ENCODE measurements at regions of chr3 and their contacts with region 1.

Region 1: DNA sequence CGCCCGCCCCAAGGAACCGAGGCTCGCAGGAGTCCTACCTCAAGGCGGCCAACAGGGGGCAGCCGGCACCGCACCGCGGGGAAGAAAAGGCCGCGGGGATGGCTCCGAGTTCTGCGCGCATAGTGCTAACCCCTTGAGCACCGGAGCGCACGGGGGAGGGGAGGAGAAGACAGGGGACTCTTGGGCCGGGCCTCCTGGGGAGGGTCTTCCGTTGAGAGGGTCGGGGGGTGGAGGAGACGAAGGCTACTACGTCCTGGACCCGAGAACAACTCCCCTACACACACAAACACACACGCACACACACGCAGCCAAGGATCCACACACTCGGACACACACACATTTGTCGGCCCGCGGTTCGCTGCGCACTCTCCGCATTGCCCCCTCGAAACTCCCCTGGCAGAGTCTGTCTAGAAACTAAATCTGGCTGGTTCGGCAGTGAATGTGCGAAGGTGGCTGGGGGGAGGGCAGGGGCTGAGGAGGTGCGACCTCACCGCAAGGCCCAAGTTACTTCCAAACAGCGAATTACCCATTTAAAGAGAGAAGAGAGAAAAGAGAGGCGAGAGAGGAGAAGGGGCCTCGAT is 1.8 kb downstream of the WNT5A start:
- DNase-seq: peak; percentile 57
- H3K4me3 ChIP-seq: peak overlapping the region; percentile 58 to 61
- H3K27ac ChIP-seq: peak overlapping the region; percentile 62 to 64
- H3K4me1 ChIP-seq: no peaks in the 10 kb centered on the region
- H3K27me3 ChIP-seq: peaks cover 10% of the 10 kb centered on the region
- CTCF ChIP-seq: peak; percentile 57 to 80 (median 68)
- POLR2A ChIP-seq: no peak

Region 2: GRCh38 chr3:54853573-54854404 is 631.5 kb before region 1 on chr3:
- intact Hi-C with region 1: loop called (anchors 10 kb)
- DNase-seq: peak; percentile 64
- H3K4me3 ChIP-seq: no peak overlapping the region
- H3K27ac ChIP-seq: no peak overlapping the region
- H3K4me1 ChIP-seq: no peaks in the 10 kb centered on the region
- H3K27me3 ChIP-seq: no peaks in the 10 kb centered on the region
- CTCF ChIP-seq: peak; percentile 78 to 88 (median 83)
- POLR2A ChIP-seq: no peak

Region 3: DNA sequence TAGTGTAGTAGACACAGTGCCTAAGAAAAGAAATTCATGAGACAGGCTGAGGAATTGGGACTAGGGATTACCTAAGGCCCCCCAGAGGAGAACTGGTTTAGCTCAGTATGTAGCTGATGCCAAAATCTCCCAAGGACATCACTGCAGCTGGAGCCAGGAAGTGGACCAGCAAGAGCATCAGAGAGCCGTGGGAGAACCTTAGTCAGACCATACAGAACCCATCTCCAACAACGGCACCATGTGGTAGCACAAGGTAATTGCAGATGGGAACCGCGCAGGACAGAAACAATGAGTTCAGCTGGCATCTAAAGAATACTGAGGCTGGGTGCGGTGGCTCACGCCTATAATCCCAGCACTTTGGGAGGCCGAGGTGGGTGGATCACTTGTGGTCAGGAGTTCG is 79.9 kb before region 1 on chr3:
- intact Hi-C with region 1: no loop called
- DNase-seq: no peak
- H3K4me3 ChIP-seq: no peak overlapping the region
- H3K27ac ChIP-seq: no peak overlapping the region
- H3K4me1 ChIP-seq: no peaks in the 10 kb centered on the region
- H3K27me3 ChIP-seq: no peaks in the 10 kb centered on the region
- CTCF ChIP-seq: no peak
- POLR2A ChIP-seq: no peak

Region 4: DNA sequence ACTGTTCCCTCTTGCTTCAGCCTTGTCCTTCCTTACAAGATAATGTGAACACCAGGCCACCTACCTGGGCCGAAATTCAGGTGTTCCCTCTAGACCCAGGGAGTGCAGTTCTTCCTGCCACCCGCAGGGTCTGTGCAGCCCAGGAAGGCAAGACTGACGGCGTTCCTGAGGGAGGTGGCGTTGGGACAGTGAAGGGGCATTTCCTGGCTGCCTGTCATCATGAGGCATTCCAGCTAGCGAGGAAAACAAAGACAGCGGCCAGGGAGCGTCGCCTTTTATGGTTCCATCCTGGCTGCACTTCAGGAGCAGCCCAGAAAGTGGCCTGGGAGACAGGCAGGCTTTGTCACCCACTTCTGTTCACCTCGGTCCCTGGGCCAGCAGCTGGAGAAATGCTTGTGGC is 86.6 kb after region 1 on chr3:
- intact Hi-C with region 1: loop called (anchors 5 kb)
- DNase-seq: peak; percentile 79
- H3K4me3 ChIP-seq: no peak overlapping the region
- H3K27ac ChIP-seq: peak overlapping the region in 1 of 2 donors; percentile 10
- H3K4me1 ChIP-seq: no peaks in the 10 kb centered on the region
- H3K27me3 ChIP-seq: no peaks in the 10 kb centered on the region
- CTCF ChIP-seq: peak in 2 of 4 experiments; percentile 46 to 59
- POLR2A ChIP-seq: no peak

Region 5: GRCh38 chr3:55721716-55722484 is 236.6 kb after region 1 on chr3:
- intact Hi-C with region 1: loop called (anchors 5 kb)
- DNase-seq: no peak
- H3K4me3 ChIP-seq: no peak overlapping the region
- H3K27ac ChIP-seq: no peak overlapping the region
- H3K4me1 ChIP-seq: no peaks in the 10 kb centered on the region
- H3K27me3 ChIP-seq: no peaks in the 10 kb centered on the region
- CTCF ChIP-seq: peak in 2 of 4 experiments; percentile 40 to 44
- POLR2A ChIP-seq: no peak

Region 6: DNA sequence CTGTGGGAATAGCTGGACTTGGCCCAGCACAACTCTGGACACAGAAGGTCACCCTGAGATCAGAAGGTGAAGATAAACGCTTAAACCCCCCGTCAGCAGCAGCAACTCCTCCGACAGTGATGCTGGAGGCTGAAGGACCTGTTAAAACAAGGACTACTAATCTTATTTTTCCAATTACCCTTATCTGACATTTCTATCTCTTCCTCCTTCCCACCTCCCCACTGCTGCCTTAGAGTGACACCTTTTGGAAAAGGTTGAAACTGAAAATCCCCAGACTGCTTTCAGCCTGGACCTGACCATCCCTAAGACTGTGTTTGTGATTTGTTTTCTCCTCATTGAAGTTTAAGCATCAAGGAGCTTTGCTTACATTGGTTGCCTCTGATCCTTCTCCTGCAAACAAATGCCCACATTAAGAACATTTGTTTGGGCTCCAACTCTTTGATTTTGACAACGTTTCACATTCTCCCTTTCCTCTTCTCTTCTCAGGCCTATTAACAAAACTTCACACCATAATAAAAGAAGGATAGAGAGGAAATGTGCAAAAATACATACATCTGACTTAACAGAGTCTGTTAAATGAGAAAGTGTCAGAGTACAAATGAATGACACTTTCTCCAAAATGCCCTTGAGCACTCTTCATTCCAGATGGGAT is 412.4 kb after region 1 on chr3:
- intact Hi-C with region 1: loop called (anchors 5 kb)
- DNase-seq: no peak
- H3K4me3 ChIP-seq: no peak overlapping the region
- H3K27ac ChIP-seq: no peak overlapping the region
- H3K4me1 ChIP-seq: no peaks in the 10 kb centered on the region
- H3K27me3 ChIP-seq: peaks cover 3% of the 10 kb centered on the region
- CTCF ChIP-seq: peak in 3 of 4 experiments; percentile 11 to 42 (median 38)
- POLR2A ChIP-seq: no peak

Region 7: DNA sequence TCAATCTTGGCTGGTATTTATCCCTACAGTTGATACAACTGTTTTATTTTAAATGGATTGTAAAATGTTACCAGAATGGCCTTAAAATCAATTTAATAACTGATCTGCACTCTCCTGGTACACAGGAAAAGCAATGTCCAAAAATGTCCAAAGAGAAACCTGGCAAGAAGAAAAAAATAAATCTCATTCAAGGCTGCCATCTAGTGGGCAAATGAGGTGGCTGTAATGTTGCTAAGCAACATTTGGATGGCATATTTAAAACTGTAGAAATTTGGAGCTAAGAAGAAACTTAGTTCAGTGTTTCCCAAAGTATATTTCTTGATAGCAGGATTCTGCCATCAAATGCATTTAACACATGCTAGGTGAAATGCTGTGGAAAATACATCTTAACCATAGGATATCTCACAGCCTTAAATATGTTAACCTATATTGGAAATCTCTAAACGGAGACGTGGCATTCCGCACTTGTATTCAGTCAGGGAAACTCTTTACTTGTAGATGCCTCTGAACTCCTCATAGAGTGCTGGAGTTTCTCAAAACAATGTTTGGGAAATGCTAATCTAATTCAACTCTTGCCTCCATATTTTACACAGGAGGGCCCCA is 766.1 kb after region 1 on chr3:
- intact Hi-C with region 1: loop called (anchors 5 kb)
- DNase-seq: peak; percentile 49
- H3K4me3 ChIP-seq: no peak overlapping the region
- H3K27ac ChIP-seq: no peak overlapping the region
- H3K4me1 ChIP-seq: no peaks in the 10 kb centered on the region
- H3K27me3 ChIP-seq: no peaks in the 10 kb centered on the region
- CTCF ChIP-seq: peak; percentile 30 to 81 (median 76)
- POLR2A ChIP-seq: no peak